HEK293 (cell line): ENCODE measurements at regions of chr11 and their contacts with region 1.

Region 1: DNA sequence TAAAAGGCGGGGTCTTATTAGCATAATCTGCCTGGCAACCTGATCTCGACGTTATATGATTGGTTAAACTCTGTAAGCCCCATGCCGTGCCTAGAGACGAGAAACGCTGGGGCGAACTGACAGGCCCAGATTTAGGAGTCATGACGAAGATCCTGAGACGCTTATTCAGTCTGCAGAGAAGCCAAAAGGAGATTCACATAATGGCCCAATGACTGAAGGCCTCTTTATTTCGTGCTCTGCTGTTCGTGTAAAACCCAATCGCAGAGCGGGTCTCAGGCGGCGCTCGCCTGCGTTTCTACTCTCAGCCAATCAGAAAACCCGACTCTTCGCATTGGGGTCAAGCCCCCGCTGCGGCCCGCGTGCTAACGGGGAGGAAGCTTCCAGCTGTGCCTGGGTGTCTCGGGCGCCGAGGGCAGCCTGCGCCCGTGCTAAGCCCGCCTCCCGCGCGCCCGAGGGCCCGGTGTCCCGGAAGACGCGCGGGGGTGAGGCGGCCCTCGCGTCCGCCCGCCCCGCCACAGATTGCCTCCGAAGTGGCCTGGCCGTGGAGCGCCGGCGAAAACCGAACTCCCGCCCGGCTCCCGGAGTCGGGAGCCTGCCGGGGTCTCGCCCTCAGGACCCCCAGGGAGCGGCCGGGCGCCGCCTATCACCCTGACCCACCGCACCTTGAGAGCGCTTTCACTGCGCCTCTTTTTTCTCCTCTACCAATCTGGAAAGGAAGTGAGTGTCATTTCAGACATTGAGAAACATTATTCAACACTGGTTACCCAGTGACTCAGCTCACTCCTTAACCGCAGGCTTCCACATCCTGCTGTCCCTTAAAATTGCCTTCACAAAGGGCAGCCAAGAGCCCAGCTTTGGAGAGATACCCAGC is 446 bp upstream of the PRDM10 start:
- H3K4me3 ChIP-seq: peak overlapping the region; percentile 80
- H3K27ac ChIP-seq: peak overlapping the region; percentile 97
- H3K4me1 ChIP-seq: no peaks in the 10 kb centered on the region
- CTCF ChIP-seq: no peak

Region 2: DNA sequence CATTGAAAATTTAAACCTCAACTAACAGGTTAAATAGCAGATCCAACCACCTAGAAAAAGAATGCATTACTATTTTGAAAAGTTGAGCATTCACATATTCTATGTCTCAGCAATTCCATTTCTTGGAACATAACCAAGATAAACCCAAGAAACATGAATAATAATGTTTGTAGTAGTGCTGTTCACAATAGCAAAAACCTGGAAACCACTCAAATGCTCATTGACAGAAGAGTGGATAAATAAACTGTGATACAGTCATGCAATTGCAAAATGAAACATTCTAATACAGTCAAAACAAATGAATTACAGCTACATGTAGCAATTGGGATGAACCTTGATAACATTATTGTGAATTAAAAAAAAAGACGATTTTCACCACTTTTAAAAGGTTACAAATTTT is 350.3 kb before region 1 on chr11:
- CTCF ChIA-PET with region 1: no interaction called
- POLR2A ChIA-PET with region 1: no interaction called
- H3K4me3 ChIP-seq: no peak overlapping the region
- H3K27ac ChIP-seq: no peak overlapping the region
- H3K4me1 ChIP-seq: no peaks in the 10 kb centered on the region
- CTCF ChIP-seq: no peak

Region 3: DNA sequence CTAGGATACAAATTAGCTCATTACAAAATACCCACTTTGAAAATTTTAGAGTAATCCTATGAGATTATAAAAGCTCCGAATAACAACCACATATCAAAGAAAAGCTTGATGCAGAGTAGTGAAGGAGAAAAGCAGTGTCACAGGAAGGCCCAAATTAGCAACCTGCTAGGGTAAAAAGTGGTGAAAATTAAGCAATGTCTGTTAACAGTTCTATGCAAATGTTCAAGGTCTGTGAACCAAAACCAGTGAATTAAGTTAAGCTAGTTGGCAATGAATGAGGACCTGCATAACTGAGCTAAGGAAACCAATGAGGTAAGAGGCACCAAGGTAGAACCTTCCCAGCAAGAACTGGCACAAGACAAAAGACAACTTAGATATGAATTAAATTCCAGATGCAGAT is 30.0 kb before region 1 on chr11:
- CTCF ChIA-PET with region 1: no interaction called
- POLR2A ChIA-PET with region 1: interaction called, 10 read pairs
- H3K4me3 ChIP-seq: no peak overlapping the region
- H3K27ac ChIP-seq: no peak overlapping the region
- H3K4me1 ChIP-seq: no peaks in the 10 kb centered on the region
- CTCF ChIP-seq: no peak

Region 4: GRCh38 chr11:129992161-129992944 is 10.7 kb before region 1 on chr11:
- CTCF ChIA-PET with region 1: interaction called, 3 read pairs
- POLR2A ChIA-PET with region 1: interaction called, 41 read pairs
- H3K4me3 ChIP-seq: no peak overlapping the region
- H3K27ac ChIP-seq: no peak overlapping the region
- H3K4me1 ChIP-seq: peaks cover 10% of the 10 kb centered on the region; the same call in 1 of the 2 replicates
- CTCF ChIP-seq: peak; percentile 37; the same call in 1 of the 2 replicates

Region 5: DNA sequence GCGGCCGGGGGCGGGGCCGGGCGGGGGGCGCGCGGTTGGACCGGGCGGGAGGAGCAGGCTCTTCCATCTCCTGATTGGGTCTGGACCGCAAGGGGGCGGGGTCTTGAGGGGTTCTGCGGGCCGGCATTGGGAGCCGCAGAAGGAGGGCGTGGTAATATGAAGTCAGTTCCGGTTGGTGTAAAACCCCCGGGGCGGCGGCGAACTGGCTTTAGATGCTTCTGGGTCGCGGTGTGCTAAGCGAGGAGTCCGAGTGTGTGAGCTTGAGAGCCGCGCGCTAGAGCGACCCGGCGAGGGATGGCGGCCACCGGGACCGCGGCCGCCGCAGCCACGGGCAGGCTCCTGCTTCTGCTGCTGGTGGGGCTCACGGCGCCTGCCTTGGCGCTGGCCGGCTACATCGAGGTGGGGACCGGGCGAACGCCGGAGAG is 66.6 kb after region 1 on chr11 and contains the start of gene APLP2:
- CTCF ChIA-PET with region 1: interaction called, 4 read pairs
- POLR2A ChIA-PET with region 1: interaction called, 15 read pairs
- H3K4me3 ChIP-seq: peak within 1 kb of the TSS; percentile 93
- H3K27ac ChIP-seq: peak within 1 kb of the TSS; percentile 91
- H3K4me1 ChIP-seq: no peaks in the 10 kb centered on the region
- CTCF ChIP-seq: no peak

Region 6: DNA sequence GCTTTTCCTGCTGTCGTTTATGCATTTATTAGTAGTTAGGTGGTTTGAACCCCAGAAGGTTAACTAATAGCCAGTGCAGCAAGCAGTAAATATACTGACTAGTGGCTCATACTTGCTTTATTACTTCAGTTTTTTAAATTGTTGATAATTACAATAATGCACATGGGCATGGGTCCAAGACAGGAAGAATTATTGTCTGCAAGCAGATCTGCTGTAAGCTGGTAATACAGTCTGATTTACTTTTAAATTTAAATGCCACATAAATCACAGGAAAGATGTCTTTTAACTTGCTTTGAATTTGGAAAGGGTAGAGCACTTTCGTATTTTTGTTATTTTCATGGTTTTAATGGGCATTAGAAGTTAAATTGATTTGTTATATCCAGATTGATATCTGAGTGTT is 93.7 kb after region 1 on chr11:
- CTCF ChIA-PET with region 1: no interaction called
- POLR2A ChIA-PET with region 1: no interaction called
- H3K4me3 ChIP-seq: no peak overlapping the region
- H3K27ac ChIP-seq: no peak overlapping the region
- H3K4me1 ChIP-seq: peaks cover 2% of the 10 kb centered on the region; the same call in 1 of the 2 replicates
- CTCF ChIP-seq: no peak

Region 7: GRCh38 chr11:130131961-130132850 is 129.1 kb after region 1 on chr11:
- CTCF ChIA-PET with region 1: interaction called, 7 read pairs
- POLR2A ChIA-PET with region 1: interaction called, 18 read pairs
- H3K4me3 ChIP-seq: no peak overlapping the region
- H3K27ac ChIP-seq: no peak overlapping the region
- H3K4me1 ChIP-seq: no peaks in the 10 kb centered on the region
- CTCF ChIP-seq: peak; percentile 32; the same call in 1 of the 2 replicates

Region 8: GRCh38 chr11:130219148-130219547 is 216.1 kb after region 1 on chr11:
- CTCF ChIA-PET with region 1: no interaction called
- POLR2A ChIA-PET with region 1: interaction called, 12 read pairs
- H3K4me3 ChIP-seq: no peak overlapping the region
- H3K27ac ChIP-seq: no peak overlapping the region
- H3K4me1 ChIP-seq: no peaks in the 10 kb centered on the region
- CTCF ChIP-seq: no peak

Region 9: DNA sequence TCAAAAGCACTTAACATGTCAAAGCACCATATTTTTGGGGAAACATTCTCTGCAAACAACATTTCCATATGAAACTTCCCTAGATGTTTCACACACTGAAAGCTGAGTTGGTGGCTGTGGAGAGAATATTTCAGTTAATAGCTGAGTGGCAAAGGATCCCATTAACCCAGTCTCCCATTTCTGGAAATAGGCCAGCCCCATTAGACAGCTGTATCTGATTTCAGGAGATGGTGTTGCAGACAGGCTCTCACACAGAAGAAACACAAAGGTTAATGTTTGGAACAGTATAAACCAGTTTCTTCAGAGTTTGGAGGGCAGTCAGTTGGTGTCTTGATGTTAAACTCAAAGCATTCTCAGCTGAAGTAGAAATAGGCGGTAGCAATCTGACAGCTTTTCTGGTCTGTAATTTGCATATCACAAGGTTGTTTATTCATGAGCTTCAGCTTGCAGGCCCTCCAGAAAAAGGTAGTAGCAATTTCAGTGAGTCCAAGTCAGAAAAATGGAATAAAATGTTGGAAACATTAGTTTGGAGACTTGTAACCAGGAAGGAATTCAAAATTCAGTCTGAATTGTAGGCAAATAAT is 327.1 kb after region 1 on chr11:
- CTCF ChIA-PET with region 1: no interaction called
- POLR2A ChIA-PET with region 1: no interaction called
- H3K4me3 ChIP-seq: no peak overlapping the region
- H3K27ac ChIP-seq: no peak overlapping the region
- H3K4me1 ChIP-seq: no peaks in the 10 kb centered on the region
- CTCF ChIP-seq: no peak

Region 10: DNA sequence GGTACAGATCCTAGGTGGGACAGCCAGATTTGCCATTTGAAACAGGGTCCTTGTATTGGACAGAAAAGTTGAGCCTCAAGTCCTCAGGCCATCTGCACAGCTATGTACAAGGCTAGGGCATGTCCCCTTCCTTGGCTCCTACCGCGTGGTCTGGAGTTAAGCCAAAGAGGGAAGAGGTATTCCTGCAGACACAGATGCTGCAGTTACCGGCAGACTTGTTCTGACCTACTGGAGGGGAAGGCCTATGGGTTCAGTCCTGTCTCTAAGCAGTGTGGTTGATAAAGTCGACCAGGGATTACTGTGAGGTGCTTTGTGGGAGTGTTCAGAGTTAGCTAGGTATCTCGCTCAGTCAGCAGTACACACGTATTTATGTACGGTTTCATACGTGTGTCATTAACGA is 626.0 kb after region 1 on chr11:
- CTCF ChIA-PET with region 1: no interaction called
- POLR2A ChIA-PET with region 1: interaction called, 10 read pairs
- H3K4me3 ChIP-seq: no peak overlapping the region
- H3K27ac ChIP-seq: no peak overlapping the region
- H3K4me1 ChIP-seq: no peaks in the 10 kb centered on the region
- CTCF ChIP-seq: no peak